ENCODE measurements at regions of chr1 and their contacts with region 1.

Region 1: GRCh38 chr1:225735252-225736149 is 42.1 kb upstream of the SRP9 start:
- DNase-seq: peak; percentile 77 to 95
- H3K4me3 ChIP-seq: peak overlapping the region in 1 of 2 donors; percentile 27
- H3K27ac ChIP-seq: peak overlapping the region; percentile 69 to 89
- H3K4me1 ChIP-seq: peaks cover 0 to 21% of the 10 kb centered on the region in 2 donors
- H3K27me3 ChIP-seq: no peaks in the 10 kb centered on the region
- CTCF ChIP-seq: no peak

Region 2: GRCh38 chr1:225700164-225700740 is 35.2 kb before region 1 on chr1:
- intact Hi-C with region 1: loop called (anchors 2 kb)
- DNase-seq: peak in 1 of 2 donors; percentile 90
- H3K4me3 ChIP-seq: peak overlapping the region in 1 of 2 donors; percentile 19
- H3K27ac ChIP-seq: peak overlapping the region; percentile 71 to 79
- H3K4me1 ChIP-seq: peaks cover 0 to 31% of the 10 kb centered on the region in 2 donors
- H3K27me3 ChIP-seq: no peaks in the 10 kb centered on the region
- CTCF ChIP-seq: no peak

Measured in ascending aorta (tissue), 2 donors.